ENCODE measurements at regions of chr3 and their contacts with region 1.

Region 1: DNA sequence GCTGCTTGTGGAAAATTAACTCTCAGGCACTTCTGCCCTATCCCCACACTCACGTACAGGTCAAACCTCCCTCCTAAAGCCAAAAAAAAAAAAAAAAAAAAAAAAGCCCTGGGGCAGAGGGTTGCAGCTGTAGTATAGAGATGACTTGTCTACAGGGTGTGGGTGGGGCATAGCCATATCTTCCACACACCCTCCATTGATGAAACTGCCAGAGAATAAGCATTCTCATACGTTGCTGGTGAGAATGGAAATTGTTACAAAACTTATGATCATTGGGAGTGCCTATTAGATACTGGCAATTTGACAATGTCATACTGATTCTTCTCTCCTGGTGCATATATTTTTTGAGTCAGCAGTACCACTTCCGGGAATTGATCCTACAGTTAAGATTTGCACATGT is 11.0 kb upstream of the CTNNB1 start:
- DNase-seq: no peak
- H3K4me3 Mint-ChIP-seq: no peak overlapping the region
- H3K27ac Mint-ChIP-seq: peak overlapping the region; percentile 51
- H3K4me1 Mint-ChIP-seq: peaks cover 35% of the 10 kb centered on the region
- H3K27me3 Mint-ChIP-seq: peaks cover 12% of the 10 kb centered on the region

Region 2: GRCh38 chr3:40980467-40980866 is 207.8 kb before region 1 on chr3:
- intact Hi-C with region 1: loop called (anchors 1 kb)
- DNase-seq: peak; percentile 33
- H3K4me3 Mint-ChIP-seq: peak overlapping the region; percentile 19
- H3K27ac Mint-ChIP-seq: peak overlapping the region; percentile 57
- H3K4me1 Mint-ChIP-seq: peaks cover 25% of the 10 kb centered on the region
- H3K27me3 Mint-ChIP-seq: peaks cover 32% of the 10 kb centered on the region

Region 3: DNA sequence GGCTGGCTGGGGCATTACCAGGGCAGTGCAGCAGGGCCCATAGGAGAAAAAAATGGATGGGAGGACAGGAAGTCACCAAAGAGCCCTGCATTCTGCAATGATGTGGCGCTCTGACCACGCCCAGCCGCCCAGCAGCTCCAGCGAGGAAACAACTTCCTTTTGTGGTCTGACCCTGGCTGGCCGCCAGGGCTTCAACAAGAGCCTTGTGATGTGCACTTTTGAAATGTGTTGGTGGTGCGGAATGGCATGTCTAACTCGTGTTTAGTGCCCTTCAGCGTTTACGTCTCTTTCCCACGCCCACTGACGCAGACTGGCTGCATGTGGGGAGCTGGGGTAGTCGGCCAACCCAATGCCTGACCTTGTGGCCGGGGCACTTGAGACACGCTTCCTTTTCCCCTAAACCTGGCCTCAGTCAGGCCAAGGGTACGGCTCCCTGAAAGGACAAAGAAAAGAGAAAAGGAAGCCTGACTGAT is 70.8 kb before region 1 on chr3:
- intact Hi-C with region 1: loop called (anchors 5 kb)
- DNase-seq: peak; percentile 70
- H3K4me3 Mint-ChIP-seq: no peak overlapping the region
- H3K27ac Mint-ChIP-seq: peak overlapping the region; percentile 67
- H3K4me1 Mint-ChIP-seq: peaks cover 24% of the 10 kb centered on the region
- H3K27me3 Mint-ChIP-seq: no peaks in the 10 kb centered on the region

Region 4: DNA sequence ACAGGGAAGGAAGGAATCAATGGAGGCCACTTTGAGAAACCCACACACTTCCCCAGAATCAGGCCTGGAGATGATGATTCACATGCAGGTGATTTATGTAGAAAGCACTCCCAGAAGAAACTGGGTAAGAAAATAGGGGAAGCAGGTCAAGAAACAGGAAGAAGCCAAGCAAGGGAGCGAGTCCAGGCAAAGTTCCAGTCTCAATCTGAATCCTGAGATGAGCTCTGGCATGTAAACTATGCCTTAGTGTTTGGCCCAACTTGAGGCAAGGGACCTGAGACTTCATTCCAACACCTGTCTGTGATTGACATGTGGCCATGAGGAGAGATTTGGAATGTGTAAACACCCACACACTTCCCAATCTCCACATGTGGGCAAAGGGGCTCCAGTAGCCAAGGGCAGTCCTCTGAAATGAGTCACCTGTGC is 50.6 kb before region 1 on chr3:
- intact Hi-C with region 1: no loop called
- DNase-seq: no peak
- H3K4me3 Mint-ChIP-seq: no peak overlapping the region
- H3K27ac Mint-ChIP-seq: no peak overlapping the region
- H3K4me1 Mint-ChIP-seq: no peaks in the 10 kb centered on the region
- H3K27me3 Mint-ChIP-seq: peaks cover 2% of the 10 kb centered on the region

Region 5: GRCh38 chr3:41158947-41159346 is 29.3 kb before region 1 on chr3:
- intact Hi-C with region 1: loop called (anchors 1 kb)
- DNase-seq: no peak
- H3K4me3 Mint-ChIP-seq: no peak overlapping the region
- H3K27ac Mint-ChIP-seq: no peak overlapping the region
- H3K4me1 Mint-ChIP-seq: peaks cover 14% of the 10 kb centered on the region
- H3K27me3 Mint-ChIP-seq: peaks cover 2% of the 10 kb centered on the region

Region 6: DNA sequence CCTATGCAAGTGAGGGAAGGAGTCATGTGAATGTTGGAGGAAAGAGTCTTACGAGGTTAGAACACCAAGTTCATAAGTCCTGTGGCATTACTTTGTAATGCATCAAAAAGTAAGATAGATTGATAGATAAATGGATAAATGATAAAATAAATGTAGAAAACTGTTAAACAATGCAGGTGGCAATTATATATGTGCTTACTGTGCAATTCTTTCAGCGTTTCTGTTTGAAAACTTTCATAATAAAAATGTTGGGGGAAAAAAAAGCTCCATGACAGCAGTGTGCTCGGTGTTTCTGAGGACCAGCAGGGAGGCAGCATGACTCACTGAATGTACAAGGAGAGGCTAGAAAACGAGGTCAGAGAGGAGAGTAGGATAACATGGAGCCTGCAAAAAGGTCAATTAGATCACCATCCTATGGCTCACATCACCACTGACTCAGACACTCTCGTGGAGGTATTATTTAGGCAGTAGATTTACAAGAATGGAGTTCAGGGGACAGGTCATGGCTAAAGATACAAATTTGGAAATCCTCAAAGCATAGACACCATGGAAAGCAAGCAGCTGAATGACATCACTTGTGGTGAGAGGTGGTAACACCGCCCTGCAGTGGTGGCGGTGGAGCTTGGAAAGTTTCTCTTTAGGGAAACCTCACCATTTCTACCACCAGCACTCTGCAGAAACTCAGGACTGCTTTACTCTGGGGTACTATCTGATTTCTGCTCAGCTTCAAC is 230.9 kb after region 1 on chr3:
- intact Hi-C with region 1: loop called (anchors 1 kb)
- DNase-seq: peak; percentile 39
- H3K4me3 Mint-ChIP-seq: peak overlapping the region; percentile 20
- H3K27ac Mint-ChIP-seq: peak overlapping the region; percentile 53
- H3K4me1 Mint-ChIP-seq: peaks cover 29% of the 10 kb centered on the region
- H3K27me3 Mint-ChIP-seq: peaks cover 4% of the 10 kb centered on the region

Region 7: DNA sequence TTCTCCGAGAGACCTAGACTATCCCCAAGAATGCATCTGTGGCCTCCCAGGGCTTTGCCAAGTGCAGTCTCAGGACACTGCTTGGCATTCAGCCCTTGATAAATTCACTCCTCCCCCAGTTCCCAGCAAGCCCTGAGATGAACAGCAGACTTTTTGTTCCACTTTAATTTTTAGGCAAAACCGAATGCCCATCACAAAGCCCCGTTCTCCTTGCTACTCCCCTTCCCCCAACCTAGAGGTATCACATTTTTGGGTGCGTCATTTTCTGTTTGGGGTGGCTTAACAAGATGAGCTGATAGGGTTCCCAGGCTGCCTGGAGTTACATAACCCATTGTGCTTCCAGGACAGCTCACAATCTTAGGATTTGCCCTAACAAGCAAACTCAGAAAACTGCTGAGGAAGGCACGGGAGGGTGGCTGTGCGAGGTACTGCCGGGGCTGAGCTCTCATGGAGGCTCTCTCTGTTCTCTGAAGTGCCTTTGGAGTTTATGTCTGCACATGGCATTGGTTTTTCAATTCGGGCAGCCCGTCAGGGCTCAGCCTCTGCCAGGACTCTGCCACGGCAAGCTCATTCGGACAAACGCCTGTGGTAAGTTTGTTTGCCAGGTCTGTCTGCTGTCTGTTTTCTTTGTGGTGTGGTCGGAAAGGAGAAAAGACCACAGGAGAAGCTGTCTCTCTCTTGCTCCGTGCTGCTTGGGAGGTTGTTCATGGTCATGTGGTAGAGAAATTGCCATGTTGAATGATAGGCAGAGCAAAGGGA is 902.9 kb after region 1 on chr3 and contains the start of gene TRAK1:
- intact Hi-C with region 1: loop called (anchors 10 kb)
- DNase-seq: no peak
- H3K4me3 Mint-ChIP-seq: peak within 1 kb of the TSS; percentile 11
- H3K27ac Mint-ChIP-seq: peak within 1 kb of the TSS; percentile 64
- H3K4me1 Mint-ChIP-seq: peaks cover 53% of the 10 kb centered on the region
- H3K27me3 Mint-ChIP-seq: no peaks in the 10 kb centered on the region
- total RNA-seq, gene TRAK1: 32.6 and 33.8 TPM in 2 replicates

Measured in activated T-helper 1 cell treated with anti-CD3 and anti-CD28 coated beads, Interleukin-12 subunit alpha, Interleukin-12 subunit beta, Interleukin-2, Interleukin-4 antibody, amounts not matched to agents 30 ng/mL and 10 ng/mL and 1 ng/mL, durations not matched to agents 14 hours and 24 hours and 36 hours (primary cell).